Activated CD4-positive, alpha-beta T cell treated with anti-CD3 and anti-CD28 coated beads, Interleukin-2, amount 10 ng/mL, durations not matched to agents 24 days and 14 days (primary cell): ENCODE measurements at regions of chr1 and their contacts with region 1.

Region 1: GRCh38 chr1:62436466-62437256 is at the start of gene USP1:
- DNase-seq: peak; percentile 99
- H3K4me3 Mint-ChIP-seq: peak within 1 kb of the TSS; percentile 89
- H3K27ac Mint-ChIP-seq: peak within 1 kb of the TSS; percentile 95
- H3K4me1 Mint-ChIP-seq: peaks cover 26% of the 10 kb centered on the region
- H3K27me3 Mint-ChIP-seq: no peaks in the 10 kb centered on the region
- total RNA-seq, gene USP1: 77.4 and 81.5 TPM in 2 replicates

Region 2: GRCh38 chr1:61724813-61725694 is 711.6 kb before region 1 on chr1 and contains the start of gene TM2D1:
- intact Hi-C with region 1: loop called (anchors 5 kb)
- DNase-seq: peak; percentile 97
- H3K4me3 Mint-ChIP-seq: peak within 1 kb of the TSS; percentile 95
- H3K27ac Mint-ChIP-seq: peak within 1 kb of the TSS; percentile 98
- H3K4me1 Mint-ChIP-seq: peaks cover 11% of the 10 kb centered on the region
- H3K27me3 Mint-ChIP-seq: no peaks in the 10 kb centered on the region
- total RNA-seq, gene TM2D1: 29.8 and 32.9 TPM in 2 replicates

Region 3: GRCh38 chr1:62687903-62688686 is 251.4 kb after region 1 on chr1 and contains the start of gene DOCK7:
- intact Hi-C with region 1: loop called (anchors 1 kb)
- DNase-seq: peak; percentile 88
- H3K4me3 Mint-ChIP-seq: peak within 1 kb of the TSS; percentile 91
- H3K27ac Mint-ChIP-seq: peak within 1 kb of the TSS; percentile 85
- H3K4me1 Mint-ChIP-seq: peaks cover 21% of the 10 kb centered on the region
- H3K27me3 Mint-ChIP-seq: peaks cover 3% of the 10 kb centered on the region
- total RNA-seq, gene DOCK7: 17.8 and 18.0 TPM in 2 replicates

Region 4: GRCh38 chr1:63367215-63368103 is 930.8 kb after region 1 on chr1 and contains the start of gene ALG6:
- intact Hi-C with region 1: loop called (anchors 10 kb)
- DNase-seq: peak; percentile 99
- H3K4me3 Mint-ChIP-seq: peak within 1 kb of the TSS; percentile 99
- H3K27ac Mint-ChIP-seq: peak within 1 kb of the TSS; percentile 93
- H3K4me1 Mint-ChIP-seq: peaks cover 15% of the 10 kb centered on the region
- H3K27me3 Mint-ChIP-seq: peaks cover 14% of the 10 kb centered on the region
- total RNA-seq, gene ALG6: 24.5 and 27.7 TPM in 2 replicates